ENCODE measurements at regions of chr12 and their contacts with region 1.

Region 1: GRCh38 chr12:112198120-112198733 is 72.9 kb downstream of the TRAFD1 start:
- DNase-seq: peak; percentile 10
- ATAC-seq: peak; percentile 98
- H3K4me3 ChIP-seq: no peak overlapping the region
- H3K27ac ChIP-seq: no peak overlapping the region
- H3K4me1 ChIP-seq: no peaks in the 10 kb centered on the region
- H3K27me3 ChIP-seq: no peaks in the 10 kb centered on the region
- CTCF ChIP-seq: peak; percentile 86

Region 2: DNA sequence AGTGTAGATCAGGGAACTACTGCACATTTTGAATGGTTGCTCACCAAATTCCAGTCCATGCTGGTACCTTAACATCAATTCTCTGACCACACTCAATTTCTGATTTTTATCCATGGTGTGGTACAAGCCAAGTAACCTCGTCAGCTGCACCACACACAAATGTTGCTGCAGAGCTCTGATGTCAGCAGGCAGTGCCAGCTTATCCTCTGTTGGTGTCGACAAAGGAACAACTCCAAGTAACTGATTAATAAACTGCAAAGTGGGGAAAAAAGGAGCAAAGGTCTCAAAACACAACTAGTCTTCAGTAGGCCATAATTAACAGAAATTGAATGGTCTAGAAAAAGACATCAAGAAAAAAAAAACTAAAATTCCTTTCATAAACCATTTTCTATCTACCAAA is 137.1 kb before region 1 on chr12:
- CTCF ChIA-PET with region 1: interaction called, 15 read pairs
- POLR2A ChIA-PET with region 1: no interaction called
- in situ Hi-C with region 1: no loop called
- intact Hi-C with region 1: no loop called
- DNase-seq: no peak
- ATAC-seq: no peak
- H3K4me3 ChIP-seq: no peak overlapping the region
- H3K27ac ChIP-seq: no peak overlapping the region
- H3K4me1 ChIP-seq: no peaks in the 10 kb centered on the region
- H3K27me3 ChIP-seq: no peaks in the 10 kb centered on the region
- CTCF ChIP-seq: no peak

Region 3: GRCh38 chr12:112108201-112109079 is 89.8 kb before region 1 on chr12 and contains the start of gene NAA25:
- CTCF ChIA-PET with region 1: interaction called, 13 read pairs
- POLR2A ChIA-PET with region 1: no interaction called
- in situ Hi-C with region 1: no loop called
- intact Hi-C with region 1: no loop called
- DNase-seq: peak; percentile 78
- ATAC-seq: peak; percentile 84
- H3K4me3 ChIP-seq: peak within 1 kb of the TSS; percentile 88 to 93
- H3K27ac ChIP-seq: peak within 1 kb of the TSS; percentile 100
- H3K4me1 ChIP-seq: peaks cover 34% of the 10 kb centered on the region
- H3K27me3 ChIP-seq: no peaks in the 10 kb centered on the region
- CTCF ChIP-seq: no peak
- total RNA-seq, gene NAA25: 32.2 TPM

Region 4: DNA sequence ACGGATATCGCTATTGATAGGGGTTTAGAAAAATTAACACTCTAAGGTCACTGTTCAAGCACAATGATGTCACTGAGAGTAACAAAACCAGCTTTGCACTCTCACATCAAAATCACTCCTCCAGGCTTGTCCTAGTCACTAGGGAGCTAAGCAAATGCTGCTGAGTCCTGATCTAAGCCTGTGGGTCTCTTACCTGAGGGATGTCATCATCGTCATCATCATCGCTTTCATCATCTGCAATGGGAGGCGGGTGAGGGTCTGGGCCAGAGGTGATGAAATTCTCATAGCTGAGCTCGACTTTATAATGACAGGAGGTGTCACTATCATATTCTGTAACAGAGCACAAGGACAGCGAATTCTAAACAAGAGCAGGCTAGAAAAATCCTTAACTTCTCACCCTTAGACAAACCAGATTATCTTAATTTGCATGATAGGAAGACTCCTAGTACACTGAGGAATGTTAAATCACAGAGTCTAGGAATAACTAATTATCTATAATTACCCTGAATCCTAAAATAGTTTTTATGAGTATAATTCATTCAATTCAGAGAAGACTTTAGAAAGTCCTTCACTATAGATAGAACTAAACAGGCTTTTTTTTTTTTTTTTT is 10.2 kb after region 1 on chr12:
- CTCF ChIA-PET with region 1: interaction called, 11 read pairs
- POLR2A ChIA-PET with region 1: no interaction called
- in situ Hi-C with region 1: no loop called
- intact Hi-C with region 1: no loop called
- DNase-seq: no peak
- ATAC-seq: no peak
- H3K4me3 ChIP-seq: no peak overlapping the region
- H3K27ac ChIP-seq: no peak overlapping the region
- H3K4me1 ChIP-seq: no peaks in the 10 kb centered on the region
- H3K27me3 ChIP-seq: no peaks in the 10 kb centered on the region
- CTCF ChIP-seq: no peak

Region 5: GRCh38 chr12:112386726-112387125 is 188.5 kb after region 1 on chr12:
- CTCF ChIA-PET with region 1: interaction called, 24 read pairs
- POLR2A ChIA-PET with region 1: interaction called, 3 read pairs
- in situ Hi-C with region 1: no loop called
- intact Hi-C with region 1: loop called (anchors 2 kb)
- DNase-seq: no peak
- ATAC-seq: no peak
- H3K4me3 ChIP-seq: no peak overlapping the region
- H3K27ac ChIP-seq: no peak overlapping the region
- H3K4me1 ChIP-seq: no peaks in the 10 kb centered on the region
- H3K27me3 ChIP-seq: no peaks in the 10 kb centered on the region
- CTCF ChIP-seq: no peak

Region 6: DNA sequence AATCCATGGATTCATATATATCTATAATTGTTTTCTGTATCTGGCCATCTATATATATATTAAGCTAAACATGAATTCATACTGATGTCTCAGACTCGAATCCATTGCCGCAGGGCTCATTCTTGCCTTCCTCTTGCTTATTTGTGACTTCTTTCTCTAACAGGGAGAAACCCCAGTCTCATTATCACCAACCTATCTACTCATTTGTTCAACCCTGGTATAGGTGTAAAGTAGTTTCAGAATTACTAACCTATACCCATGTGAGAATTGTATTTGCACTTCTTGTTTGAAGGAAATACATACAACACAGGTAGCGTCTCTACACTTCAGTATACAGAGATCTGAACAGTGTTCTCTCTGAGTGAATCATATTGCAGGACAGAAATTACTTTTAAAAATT is 298.3 kb after region 1 on chr12:
- CTCF ChIA-PET with region 1: no interaction called
- POLR2A ChIA-PET with region 1: no interaction called
- in situ Hi-C with region 1: no loop called
- intact Hi-C with region 1: no loop called
- DNase-seq: no peak
- ATAC-seq: no peak
- H3K4me3 ChIP-seq: no peak overlapping the region
- H3K27ac ChIP-seq: no peak overlapping the region
- H3K4me1 ChIP-seq: no peaks in the 10 kb centered on the region
- H3K27me3 ChIP-seq: no peaks in the 10 kb centered on the region
- CTCF ChIP-seq: no peak

Measured in Panc1 (cell line).